Activated CD4-positive, alpha-beta T cell treated with anti-CD3 and anti-CD28 coated beads for 36 hours (primary cell): ENCODE measurements at regions of chr1 and their contacts with region 1.

Region 1: GRCh38 chr1:151399890-151400495 is 620 bp downstream of the PSMB4 start:
- DNase-seq: peak; percentile 43
- ATAC-seq: peak; percentile 21
- H3K4me3 Mint-ChIP-seq: peak overlapping the region; percentile 88
- H3K27ac Mint-ChIP-seq: peak overlapping the region; percentile 99
- H3K4me1 Mint-ChIP-seq: peaks cover 29% of the 10 kb centered on the region
- H3K27me3 Mint-ChIP-seq: no peaks in the 10 kb centered on the region

Region 2: DNA sequence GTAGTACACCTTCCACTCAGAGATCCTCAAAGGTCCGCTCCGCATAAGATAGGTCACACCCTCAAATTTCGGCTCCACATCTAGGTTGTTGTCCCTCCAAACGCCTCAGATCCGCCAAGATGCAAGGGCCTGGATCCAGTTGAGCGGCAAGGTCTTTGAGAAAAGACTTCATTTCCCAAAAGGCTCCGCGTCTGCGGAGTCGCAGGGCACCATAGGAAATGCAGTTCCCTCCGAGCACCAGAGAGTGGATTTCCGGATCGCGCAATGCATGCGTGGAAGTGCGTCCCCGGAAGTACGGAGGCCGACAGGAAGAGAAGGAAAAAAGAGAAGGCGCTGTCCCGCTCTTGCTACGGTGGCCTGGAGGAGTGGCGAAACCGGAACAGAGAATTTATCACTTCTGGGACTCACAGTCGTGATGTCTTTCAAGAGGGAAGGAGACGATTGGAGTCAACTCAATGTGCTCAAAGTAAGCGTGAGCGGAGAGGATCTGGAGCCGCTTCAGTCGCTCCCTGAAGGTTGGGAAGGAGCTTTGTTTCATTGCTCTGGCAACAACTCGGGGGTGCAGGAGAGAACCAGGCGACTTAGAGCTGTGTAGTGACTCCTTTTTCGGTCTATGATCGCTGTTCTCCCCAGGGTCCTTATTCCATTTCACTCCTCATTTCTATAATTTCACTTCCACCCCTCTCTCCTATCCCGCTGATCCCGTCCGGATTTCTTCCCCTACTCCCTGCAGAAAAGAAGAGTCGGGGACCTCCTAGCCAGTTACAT is 234.1 kb before region 1 on chr1 and contains the starts of genes LYSMD1 and SCNM1:
- CTCF ChIA-PET with region 1: no interaction called
- POLR2A ChIA-PET with region 1: interaction called, 4 read pairs
- intact Hi-C with region 1: loop called in 1 of 2 experiments (anchors 1 kb)
- DNase-seq: peak; percentile 98
- ATAC-seq: peak; percentile 96
- H3K4me3 Mint-ChIP-seq: peak within 1 kb of the TSS; percentile 92
- H3K27ac Mint-ChIP-seq: peak within 1 kb of the TSS; percentile 98
- H3K4me1 Mint-ChIP-seq: peaks cover 48% of the 10 kb centered on the region
- H3K27me3 Mint-ChIP-seq: no peaks in the 10 kb centered on the region
- total RNA-seq, gene LYSMD1: 4.3 to 5.1 TPM
- total RNA-seq, gene SCNM1: 64.3 to 90.8 TPM

Region 3: DNA sequence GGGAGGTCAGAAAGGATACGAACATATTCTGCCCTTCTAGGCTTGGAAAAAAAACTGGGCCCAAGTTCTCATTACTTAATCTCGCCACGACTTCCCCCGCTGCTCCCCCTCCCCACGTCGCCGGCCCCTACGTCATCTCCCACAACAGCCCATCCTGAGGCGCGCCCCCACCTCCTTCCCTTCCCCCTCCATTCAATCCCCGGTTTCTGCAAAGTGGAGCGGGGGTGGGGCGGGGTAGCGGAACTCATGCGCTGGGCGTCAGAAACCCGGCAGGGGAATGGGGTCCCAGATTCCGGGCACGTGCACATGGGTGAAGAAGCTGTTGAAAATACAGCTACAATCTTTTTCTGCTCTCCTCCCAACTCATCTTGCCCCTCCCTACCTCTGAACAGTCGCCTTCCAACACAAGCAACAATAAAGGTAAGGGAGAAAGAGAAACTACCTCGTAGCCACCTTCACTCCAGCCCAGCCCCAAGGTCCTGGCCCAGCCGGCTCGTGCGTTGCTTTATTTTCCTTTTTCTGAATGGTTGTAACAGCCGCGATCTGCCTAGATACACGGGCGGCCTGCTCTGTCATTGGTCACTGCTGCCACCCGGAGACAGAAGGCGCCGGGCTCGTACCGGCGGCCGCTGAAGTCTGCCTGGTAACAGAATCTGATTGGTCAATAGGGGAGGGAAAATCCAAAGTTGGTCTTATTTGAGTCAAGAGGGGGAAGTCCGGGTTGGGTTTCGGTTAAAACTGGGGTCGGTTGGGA is 53.0 kb before region 1 on chr1 and contains the start of gene RFX5:
- CTCF ChIA-PET with region 1: interaction called, 8 read pairs
- POLR2A ChIA-PET with region 1: interaction called, 5 read pairs
- intact Hi-C with region 1: loop called (anchors 1 kb)
- DNase-seq: peak; percentile 96
- ATAC-seq: peak; percentile 98
- H3K4me3 Mint-ChIP-seq: peak within 1 kb of the TSS; percentile 96
- H3K27ac Mint-ChIP-seq: peak within 1 kb of the TSS; percentile 94
- H3K4me1 Mint-ChIP-seq: peaks cover 31% of the 10 kb centered on the region
- H3K27me3 Mint-ChIP-seq: no peaks in the 10 kb centered on the region
- total RNA-seq, gene RFX5: 47.6 to 50.4 TPM

Region 4: DNA sequence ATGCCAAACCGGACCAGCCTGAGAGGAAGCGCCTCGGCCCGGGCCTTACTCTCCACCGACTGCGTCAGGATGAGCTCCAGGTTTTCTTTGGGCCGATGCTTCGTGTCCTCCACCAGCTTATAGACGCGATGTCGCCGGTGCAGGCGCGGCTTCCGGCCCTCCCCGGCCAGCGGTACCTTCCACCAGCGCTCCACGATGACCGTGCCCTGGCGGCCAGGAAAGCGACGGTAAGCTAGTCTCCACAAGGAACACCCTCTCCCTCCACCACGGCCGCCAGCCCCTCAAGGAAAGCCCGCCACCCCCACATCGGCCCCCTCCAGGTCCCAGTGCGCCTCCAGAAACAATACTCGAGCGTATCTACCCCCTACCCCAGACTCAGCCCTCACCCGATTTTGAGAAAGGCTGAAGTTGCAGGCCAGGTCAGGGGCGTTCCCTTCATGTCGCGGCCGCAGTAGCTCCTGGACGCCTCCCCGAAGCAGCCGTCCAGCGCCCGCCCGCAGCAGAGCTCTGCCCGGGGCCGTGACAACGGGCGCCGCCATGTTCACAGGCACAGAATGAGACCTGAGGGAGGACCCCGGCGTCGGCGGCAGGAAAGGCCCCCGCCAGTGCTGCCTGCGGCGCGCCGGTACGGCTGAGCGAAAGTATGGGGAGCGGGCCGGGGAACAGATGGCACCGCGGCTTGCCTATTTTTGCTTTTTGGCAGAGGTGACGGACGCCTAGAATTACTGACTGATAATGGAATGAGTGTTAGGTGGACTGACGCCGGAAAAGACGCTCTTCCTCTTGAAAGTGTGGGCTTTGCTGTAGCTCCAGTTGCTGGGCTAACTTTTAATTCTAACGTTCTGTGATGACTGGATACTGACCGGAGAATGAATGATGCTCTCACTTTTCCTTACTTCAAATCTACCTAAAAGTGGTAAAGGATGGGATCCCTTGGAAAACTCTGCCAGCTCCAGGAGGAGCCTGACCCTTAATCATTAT is 363.2 kb after region 1 on chr1 and contains the start of gene MRPL9:
- CTCF ChIA-PET with region 1: no interaction called
- POLR2A ChIA-PET with region 1: no interaction called
- intact Hi-C with region 1: loop called in 1 of 2 experiments (anchors 2 kb)
- DNase-seq: peak; percentile 94
- ATAC-seq: peak; percentile 99
- H3K4me3 Mint-ChIP-seq: peak within 1 kb of the TSS; percentile 89
- H3K27ac Mint-ChIP-seq: peak within 1 kb of the TSS; percentile 95
- H3K4me1 Mint-ChIP-seq: peaks cover 24% of the 10 kb centered on the region
- H3K27me3 Mint-ChIP-seq: no peaks in the 10 kb centered on the region
- total RNA-seq, gene MRPL9: 139 to 184 TPM